MCF 10A (cell line): ENCODE measurements at regions of chr10 and their contacts with region 1.

Region 1: GRCh38 chr10:96229568-96230030 is 41.8 kb downstream of the BLNK start:
- DNase-seq: peak; percentile 71
- H3K4me3 Mint-ChIP-seq: no peak overlapping the region
- H3K27ac Mint-ChIP-seq: no peak overlapping the region
- H3K4me1 Mint-ChIP-seq: no peaks in the 10 kb centered on the region
- H3K27me3 Mint-ChIP-seq: no peaks in the 10 kb centered on the region
- CTCF ChIP-seq: peak; percentile 73

Region 2: DNA sequence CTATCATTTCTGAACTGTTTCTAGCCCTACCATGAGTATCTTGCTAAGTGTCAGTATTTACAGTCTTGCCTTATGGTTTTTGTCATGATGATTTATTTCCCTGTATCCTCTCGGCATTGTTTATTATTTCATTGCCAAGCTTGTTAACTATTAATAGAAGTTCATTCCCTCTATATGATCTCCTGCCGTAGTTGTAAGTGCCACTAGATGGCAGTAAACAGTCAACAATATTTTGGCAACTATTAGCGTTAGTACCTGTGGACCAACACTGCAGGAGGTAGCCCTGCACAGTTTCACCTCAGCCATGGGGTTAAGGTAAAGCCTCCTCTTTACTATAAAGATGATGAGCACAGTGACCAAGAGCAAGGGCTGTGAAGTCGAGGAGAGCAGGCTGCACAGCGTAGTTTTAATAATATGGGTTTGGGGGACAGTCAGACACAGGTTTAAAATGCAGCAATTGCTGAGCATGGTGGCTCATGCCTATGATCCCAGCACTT is 212.4 kb before region 1 on chr10:
- CTCF ChIA-PET with region 1: interaction called, 20 read pairs
- POLR2A ChIA-PET with region 1: no interaction called
- intact Hi-C with region 1: loop called (anchors 2 kb)
- DNase-seq: peak; percentile 75
- H3K4me3 Mint-ChIP-seq: no peak overlapping the region
- H3K27ac Mint-ChIP-seq: no peak overlapping the region
- H3K4me1 Mint-ChIP-seq: peaks cover 5% of the 10 kb centered on the region
- H3K27me3 Mint-ChIP-seq: peaks cover 10% of the 10 kb centered on the region
- CTCF ChIP-seq: peak; percentile 32

Region 3: DNA sequence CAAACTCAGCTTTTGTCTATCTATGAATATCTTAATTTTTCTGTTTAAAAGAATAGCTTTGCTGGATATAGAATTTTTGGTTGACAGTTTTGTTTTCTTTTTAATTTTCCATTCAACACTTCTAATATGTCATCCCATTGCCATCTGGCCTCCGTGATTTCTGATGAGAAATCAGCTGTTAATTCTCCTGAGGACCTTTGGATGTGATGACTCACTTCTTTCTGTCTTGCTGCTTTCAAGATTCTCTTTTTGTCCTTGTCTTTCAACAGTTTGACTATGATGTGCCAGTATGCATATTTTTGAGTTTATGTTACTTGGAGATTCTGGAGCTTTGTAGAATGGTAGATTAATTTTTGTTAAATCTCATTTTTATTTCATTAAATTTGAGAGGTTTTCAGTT is 61.1 kb before region 1 on chr10:
- CTCF ChIA-PET with region 1: no interaction called
- POLR2A ChIA-PET with region 1: no interaction called
- intact Hi-C with region 1: no loop called
- DNase-seq: no peak
- H3K4me3 Mint-ChIP-seq: no peak overlapping the region
- H3K27ac Mint-ChIP-seq: no peak overlapping the region
- H3K4me1 Mint-ChIP-seq: no peaks in the 10 kb centered on the region
- H3K27me3 Mint-ChIP-seq: no peaks in the 10 kb centered on the region
- CTCF ChIP-seq: no peak

Region 4: DNA sequence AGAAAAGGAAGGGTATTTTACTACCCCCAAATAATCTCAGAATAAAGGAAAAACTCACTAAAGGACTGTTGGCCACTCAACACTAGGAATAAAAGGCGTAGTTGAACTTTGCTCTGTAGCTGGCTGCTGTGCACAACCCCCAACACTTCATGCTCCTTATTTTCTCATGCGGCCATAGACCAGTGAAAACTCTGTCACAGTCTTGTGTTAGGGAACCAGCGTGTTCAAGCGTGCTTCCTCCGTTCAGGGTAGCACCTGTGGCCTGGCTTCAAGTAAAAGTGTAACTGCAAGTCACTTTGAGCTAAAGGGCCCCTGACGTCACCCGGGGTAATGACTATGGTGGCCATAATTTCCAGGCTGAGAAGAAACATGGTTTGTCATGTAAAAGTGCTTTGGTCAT is 14.8 kb after region 1 on chr10:
- CTCF ChIA-PET with region 1: interaction called, 19 read pairs
- POLR2A ChIA-PET with region 1: interaction called, 4 read pairs
- intact Hi-C with region 1: no loop called
- DNase-seq: no peak
- H3K4me3 Mint-ChIP-seq: no peak overlapping the region
- H3K27ac Mint-ChIP-seq: no peak overlapping the region
- H3K4me1 Mint-ChIP-seq: no peaks in the 10 kb centered on the region
- H3K27me3 Mint-ChIP-seq: no peaks in the 10 kb centered on the region
- CTCF ChIP-seq: no peak

Region 5: GRCh38 chr10:96261930-96262329 is 32.3 kb after region 1 on chr10:
- CTCF ChIA-PET with region 1: interaction called, 12 read pairs
- POLR2A ChIA-PET with region 1: no interaction called
- intact Hi-C with region 1: no loop called
- DNase-seq: no peak
- H3K4me3 Mint-ChIP-seq: no peak overlapping the region
- H3K27ac Mint-ChIP-seq: no peak overlapping the region
- H3K4me1 Mint-ChIP-seq: peaks cover 2% of the 10 kb centered on the region
- H3K27me3 Mint-ChIP-seq: no peaks in the 10 kb centered on the region
- CTCF ChIP-seq: no peak

Region 6: GRCh38 chr10:96287392-96288105 is 58.0 kb after region 1 on chr10:
- CTCF ChIA-PET with region 1: interaction called, 250 read pairs
- POLR2A ChIA-PET with region 1: interaction called, 4 read pairs
- intact Hi-C with region 1: no loop called
- DNase-seq: peak; percentile 66
- H3K4me3 Mint-ChIP-seq: no peak overlapping the region
- H3K27ac Mint-ChIP-seq: peak overlapping the region; percentile 68
- H3K4me1 Mint-ChIP-seq: peaks cover 11% of the 10 kb centered on the region
- H3K27me3 Mint-ChIP-seq: no peaks in the 10 kb centered on the region
- CTCF ChIP-seq: no peak

Region 7: GRCh38 chr10:96299383-96299782 is 69.8 kb after region 1 on chr10:
- CTCF ChIA-PET with region 1: interaction called, 250 read pairs
- POLR2A ChIA-PET with region 1: interaction called, 6 read pairs
- intact Hi-C with region 1: no loop called
- DNase-seq: no peak
- H3K4me3 Mint-ChIP-seq: no peak overlapping the region
- H3K27ac Mint-ChIP-seq: no peak overlapping the region
- H3K4me1 Mint-ChIP-seq: no peaks in the 10 kb centered on the region
- H3K27me3 Mint-ChIP-seq: peaks cover 44% of the 10 kb centered on the region
- CTCF ChIP-seq: no peak

Region 8: GRCh38 chr10:96319754-96320474 is 90.3 kb after region 1 on chr10:
- CTCF ChIA-PET with region 1: interaction called, 10 read pairs
- POLR2A ChIA-PET with region 1: no interaction called
- intact Hi-C with region 1: no loop called
- DNase-seq: no peak
- H3K4me3 Mint-ChIP-seq: no peak overlapping the region
- H3K27ac Mint-ChIP-seq: no peak overlapping the region
- H3K4me1 Mint-ChIP-seq: no peaks in the 10 kb centered on the region
- H3K27me3 Mint-ChIP-seq: peaks cover 37% of the 10 kb centered on the region
- CTCF ChIP-seq: no peak

Region 9: GRCh38 chr10:96814264-96814663 is 584.7 kb after region 1 on chr10:
- CTCF ChIA-PET with region 1: no interaction called
- POLR2A ChIA-PET with region 1: no interaction called
- intact Hi-C with region 1: no loop called
- DNase-seq: peak; percentile 48
- H3K4me3 Mint-ChIP-seq: no peak overlapping the region
- H3K27ac Mint-ChIP-seq: no peak overlapping the region
- H3K4me1 Mint-ChIP-seq: no peaks in the 10 kb centered on the region
- H3K27me3 Mint-ChIP-seq: no peaks in the 10 kb centered on the region
- CTCF ChIP-seq: no peak